Mammary epithelial cell (primary cell): ENCODE measurements at regions of chr11 and their contacts with region 1.

Region 1: DNA sequence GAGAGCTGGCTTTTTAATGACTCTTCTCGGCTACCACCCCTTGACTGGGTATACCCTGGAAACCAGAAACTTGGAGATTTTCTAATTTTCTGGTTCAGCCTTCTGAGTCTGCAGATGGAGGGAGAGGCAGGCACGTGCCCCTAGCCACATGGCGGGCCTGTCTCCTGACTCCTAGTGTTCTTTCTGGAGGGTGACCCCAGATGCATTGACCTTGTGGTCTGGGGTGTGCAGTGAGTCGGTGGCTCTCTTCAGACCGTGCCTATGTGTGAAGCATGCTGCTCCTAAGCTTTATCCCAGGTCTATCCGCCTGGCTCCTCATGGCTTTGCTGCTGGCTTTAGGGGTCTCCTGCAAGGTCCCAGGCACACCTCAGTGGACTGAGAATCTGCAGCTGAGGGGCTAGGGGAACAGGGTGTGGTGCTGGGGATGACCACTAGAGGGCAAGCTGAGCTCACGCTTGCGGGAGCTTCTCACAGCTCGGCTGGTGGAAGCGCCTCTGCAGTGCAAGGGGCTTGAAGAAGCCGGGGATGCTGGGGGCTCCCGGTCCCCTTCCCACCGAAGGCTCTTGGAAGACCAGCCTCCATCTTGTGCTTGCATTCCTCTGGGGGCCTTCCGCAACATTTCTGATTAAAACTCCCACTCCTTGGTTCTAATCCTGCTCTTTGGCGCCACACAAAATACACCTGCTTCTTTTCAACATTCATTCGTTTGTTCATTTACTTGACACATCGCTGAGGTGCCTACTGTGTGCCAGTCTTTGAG is 51.8 kb downstream of the OTOG start:
- DNase-seq: peak; percentile 20
- H3K4me3 ChIP-seq: no peak overlapping the region
- H3K27ac ChIP-seq: no peak overlapping the region
- H3K4me1 ChIP-seq: no peaks in the 10 kb centered on the region
- H3K27me3 ChIP-seq: no peaks in the 10 kb centered on the region
- CTCF ChIP-seq: peak; percentile 96 to 97

Region 2: GRCh38 chr11:17650127-17650911 is 51.4 kb after region 1 on chr11:
- CTCF ChIA-PET with region 1: no interaction called
- dilution Hi-C with region 1: no loop called
- in situ Hi-C with region 1: no loop called
- intact Hi-C with region 1: no loop called
- DNase-seq: no peak
- H3K4me3 ChIP-seq: no peak overlapping the region
- H3K27ac ChIP-seq: no peak overlapping the region
- H3K4me1 ChIP-seq: no peaks in the 10 kb centered on the region
- H3K27me3 ChIP-seq: no peaks in the 10 kb centered on the region
- CTCF ChIP-seq: no peak

Region 3: GRCh38 chr11:17730608-17731462 is 132.0 kb after region 1 on chr11:
- CTCF ChIA-PET with region 1: interaction called, 12 read pairs
- dilution Hi-C with region 1: no loop called
- in situ Hi-C with region 1: loop called in 1 of 2 experiments (anchors 10 kb)
- intact Hi-C with region 1: loop called (anchors 1 kb)
- DNase-seq: peak; percentile 68
- H3K4me3 ChIP-seq: no peak overlapping the region
- H3K27ac ChIP-seq: no peak overlapping the region
- H3K4me1 ChIP-seq: peaks cover 9% of the 10 kb centered on the region
- H3K27me3 ChIP-seq: peaks cover 12% of the 10 kb centered on the region
- CTCF ChIP-seq: peak; percentile 82 to 96